ENCODE measurements at regions of chr2 and their contacts with region 1.

Region 1: DNA sequence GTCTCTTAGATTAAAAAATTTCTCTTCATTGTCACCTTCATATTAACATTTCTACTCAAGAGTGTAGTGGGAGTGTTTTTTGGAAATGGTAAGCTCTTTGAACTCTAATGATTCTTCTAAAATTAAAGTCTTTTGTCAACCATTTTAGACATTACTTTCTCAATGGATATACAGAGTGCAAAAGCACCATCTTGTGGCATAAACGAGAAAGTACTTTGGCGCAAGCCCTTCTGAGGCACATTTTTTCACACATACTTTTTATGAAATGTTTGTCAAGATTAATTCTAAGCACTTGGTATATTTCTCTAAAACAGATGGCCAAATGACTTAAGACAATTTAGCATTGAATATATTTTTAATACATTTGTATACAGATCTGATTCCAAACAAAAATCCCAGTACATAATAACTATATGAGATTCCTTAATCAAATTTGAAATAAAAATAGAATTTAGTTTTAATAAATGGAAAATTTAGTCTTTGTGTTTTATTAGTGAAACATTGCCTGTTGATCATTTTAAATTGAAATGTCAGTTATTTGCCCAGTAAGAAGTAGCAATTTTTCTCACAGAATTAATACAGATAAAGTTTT is 63.3 kb upstream of the GALNT5 start:
- DNase-seq: no peak
- ATAC-seq: peak; percentile 83
- H3K4me3 ChIP-seq: no peak overlapping the region
- H3K27ac ChIP-seq: no peak overlapping the region
- H3K4me1 ChIP-seq: peaks cover 10% of the 10 kb centered on the region; the same call in 1 of the 2 replicates
- H3K27me3 ChIP-seq: peaks cover 0 to 3% of the 10 kb centered on the region in 2 experiments; a peak in 1 of 4 replicates
- CTCF ChIP-seq: peak; percentile 59 to 77 (median 63)
- EP300 ChIP-seq: no peak
- POLR2A ChIP-seq: no peak
- RAD21 ChIP-seq: peak; percentile 93

Region 2: DNA sequence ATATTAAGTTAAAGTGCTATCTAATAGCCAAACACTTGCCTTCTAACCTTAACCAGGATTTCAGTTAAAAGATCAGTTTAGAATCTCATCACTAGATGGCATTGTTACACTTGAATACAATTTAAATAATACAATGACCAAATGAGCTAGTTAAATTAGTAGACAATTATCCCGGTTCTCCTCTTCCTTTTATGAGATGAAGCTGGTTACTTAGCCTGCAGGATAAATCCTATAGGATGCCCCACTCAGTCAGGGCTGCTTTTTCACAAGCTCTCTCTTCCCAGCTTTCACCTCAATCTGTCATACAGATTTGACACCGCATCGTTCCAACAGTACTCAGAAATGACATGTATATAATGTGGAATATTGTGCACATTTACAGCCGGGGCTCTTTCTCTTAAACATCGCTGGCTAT is 1816.9 kb before region 1 on chr2:
- CTCF ChIA-PET with region 1: interaction called, 30 read pairs
- POLR2A ChIA-PET with region 1: no interaction called
- RAD21 ChIA-PET with region 1: interaction called, 23 read pairs
- SMC1A ChIA-PET with region 1: interaction called, 12 read pairs
- in situ Hi-C with region 1: loop called (anchors 10 kb)
- intact Hi-C with region 1: loop called (anchors 2 kb)
- DNase-seq: no peak
- ATAC-seq: peak; percentile 73
- H3K4me3 ChIP-seq: no peak overlapping the region
- H3K27ac ChIP-seq: no peak overlapping the region
- H3K4me1 ChIP-seq: no peaks in the 10 kb centered on the region
- H3K27me3 ChIP-seq: no peaks in the 10 kb centered on the region
- CTCF ChIP-seq: peak in 2 of 3 experiments; percentile 10 to 17; a peak in 3 of 6 replicates
- EP300 ChIP-seq: no peak
- POLR2A ChIP-seq: no peak
- RAD21 ChIP-seq: peak; percentile 50

Region 3: GRCh38 chr2:157046396-157046795 is 147.8 kb before region 1 on chr2:
- CTCF ChIA-PET with region 1: interaction called, 100 read pairs
- POLR2A ChIA-PET with region 1: no interaction called
- RAD21 ChIA-PET with region 1: interaction called, 5 read pairs
- SMC1A ChIA-PET with region 1: interaction called, 29 read pairs
- in situ Hi-C with region 1: no loop called
- intact Hi-C with region 1: no loop called
- DNase-seq: no peak
- ATAC-seq: peak; percentile 54
- H3K4me3 ChIP-seq: no peak overlapping the region
- H3K27ac ChIP-seq: no peak overlapping the region
- H3K4me1 ChIP-seq: no peaks in the 10 kb centered on the region
- H3K27me3 ChIP-seq: no peaks in the 10 kb centered on the region; a peak in 1 of 4 replicates
- CTCF ChIP-seq: no peak
- EP300 ChIP-seq: no peak
- POLR2A ChIP-seq: no peak
- RAD21 ChIP-seq: no peak

Region 4: GRCh38 chr2:157061799-157062198 is 132.4 kb before region 1 on chr2:
- CTCF ChIA-PET with region 1: interaction called, 100 read pairs
- POLR2A ChIA-PET with region 1: no interaction called
- RAD21 ChIA-PET with region 1: interaction called, 29 read pairs
- SMC1A ChIA-PET with region 1: interaction called, 107 read pairs
- in situ Hi-C with region 1: no loop called
- intact Hi-C with region 1: loop called (anchors 2 kb)
- DNase-seq: peak; percentile 51
- ATAC-seq: peak; percentile 89
- H3K4me3 ChIP-seq: no peak overlapping the region
- H3K27ac ChIP-seq: no peak overlapping the region
- H3K4me1 ChIP-seq: peaks cover 8% of the 10 kb centered on the region; the same call in 1 of the 2 replicates
- H3K27me3 ChIP-seq: peaks cover 0 to 2% of the 10 kb centered on the region in 2 experiments; a peak in 2 of 4 replicates
- CTCF ChIP-seq: no peak
- EP300 ChIP-seq: peak in 1 of 2 experiments; percentile 71; a peak in 2 of 4 replicates
- POLR2A ChIP-seq: no peak
- RAD21 ChIP-seq: no peak

Region 5: GRCh38 chr2:157150747-157151146 is 43.4 kb before region 1 on chr2:
- CTCF ChIA-PET with region 1: interaction called, 9 read pairs
- POLR2A ChIA-PET with region 1: no interaction called
- RAD21 ChIA-PET with region 1: interaction called, 8 read pairs
- SMC1A ChIA-PET with region 1: interaction called, 18 read pairs
- in situ Hi-C with region 1: no loop called
- intact Hi-C with region 1: no loop called
- DNase-seq: peak; percentile 68
- ATAC-seq: peak; percentile 93
- H3K4me3 ChIP-seq: no peak overlapping the region
- H3K27ac ChIP-seq: peak overlapping the region; percentile 18; the same call in 1 of the 2 replicates
- H3K4me1 ChIP-seq: peaks cover 10% of the 10 kb centered on the region
- H3K27me3 ChIP-seq: no peaks in the 10 kb centered on the region
- CTCF ChIP-seq: no peak
- EP300 ChIP-seq: peak; percentile 77 to 83; a peak in 2 of 4 replicates
- POLR2A ChIP-seq: no peak
- RAD21 ChIP-seq: no peak

Region 6: GRCh38 chr2:157182834-157183396 is 11.3 kb before region 1 on chr2:
- CTCF ChIA-PET with region 1: interaction called, 15 read pairs
- POLR2A ChIA-PET with region 1: no interaction called
- RAD21 ChIA-PET with region 1: interaction called, 11 read pairs
- SMC1A ChIA-PET with region 1: interaction called, 34 read pairs
- in situ Hi-C with region 1: no loop called
- intact Hi-C with region 1: no loop called
- DNase-seq: no peak
- ATAC-seq: 0 out of 3 replicates have a peak, but pooled peaks have one; percentile 32
- H3K4me3 ChIP-seq: no peak overlapping the region
- H3K27ac ChIP-seq: no peak overlapping the region
- H3K4me1 ChIP-seq: no peaks in the 10 kb centered on the region
- H3K27me3 ChIP-seq: peaks cover 0 to 3% of the 10 kb centered on the region in 2 experiments; a peak in 1 of 4 replicates
- CTCF ChIP-seq: no peak
- EP300 ChIP-seq: no peak
- POLR2A ChIP-seq: no peak
- RAD21 ChIP-seq: no peak

Region 7: GRCh38 chr2:157327621-157328500 is 133.7 kb after region 1 on chr2:
- CTCF ChIA-PET with region 1: no interaction called
- POLR2A ChIA-PET with region 1: no interaction called
- RAD21 ChIA-PET with region 1: no interaction called
- SMC1A ChIA-PET with region 1: no interaction called
- in situ Hi-C with region 1: no loop called
- intact Hi-C with region 1: no loop called
- DNase-seq: peak; percentile 68
- ATAC-seq: peak; percentile 99
- H3K4me3 ChIP-seq: no peak overlapping the region
- H3K27ac ChIP-seq: no peak overlapping the region
- H3K4me1 ChIP-seq: no peaks in the 10 kb centered on the region
- H3K27me3 ChIP-seq: no peaks in the 10 kb centered on the region
- CTCF ChIP-seq: peak; percentile 88 to 97 (median 96)
- EP300 ChIP-seq: no peak
- POLR2A ChIP-seq: no peak
- RAD21 ChIP-seq: peak; percentile 88

Region 8: GRCh38 chr2:157413326-157414035 is 219.3 kb after region 1 on chr2:
- CTCF ChIA-PET with region 1: no interaction called
- POLR2A ChIA-PET with region 1: no interaction called
- RAD21 ChIA-PET with region 1: no interaction called
- SMC1A ChIA-PET with region 1: no interaction called
- in situ Hi-C with region 1: no loop called
- intact Hi-C with region 1: no loop called
- DNase-seq: peak; percentile 97
- ATAC-seq: peak; percentile 87
- H3K4me3 ChIP-seq: no peak overlapping the region
- H3K27ac ChIP-seq: peak overlapping the region; percentile 86
- H3K4me1 ChIP-seq: peaks cover 38% of the 10 kb centered on the region
- H3K27me3 ChIP-seq: no peaks in the 10 kb centered on the region
- CTCF ChIP-seq: no peak
- EP300 ChIP-seq: peak; percentile 71 to 74; a peak in 2 of 4 replicates
- POLR2A ChIP-seq: peak; percentile 18; the same call in 1 of the 2 replicates
- RAD21 ChIP-seq: peak; percentile 37